ENCODE measurements at regions of chr16 and their contacts with region 1.

Region 1: GRCh38 chr16:1826691-1827575 is at the starts of genes FAHD1 and HAGH:
- DNase-seq: peak; percentile 91
- H3K4me3 Mint-ChIP-seq: peak within 1 kb of the TSS; percentile 96
- H3K27ac Mint-ChIP-seq: peak within 1 kb of the TSS; percentile 81
- H3K4me1 Mint-ChIP-seq: peaks cover 42% of the 10 kb centered on the region
- H3K27me3 Mint-ChIP-seq: no peaks in the 10 kb centered on the region
- total RNA-seq, gene FAHD1: 7.7 to 7.9 TPM
- total RNA-seq, gene HAGH: 51.3 to 51.8 TPM

Region 2: GRCh38 chr16:1782352-1783091 is 44.4 kb before region 1 on chr16 and contains the starts of genes NUBP2 and SPSB3:
- CTCF ChIA-PET with region 1: interaction called, 4 read pairs
- POLR2A ChIA-PET with region 1: interaction called, 20 read pairs
- DNase-seq: peak; percentile 99
- H3K4me3 Mint-ChIP-seq: peak within 1 kb of the TSS; percentile 91
- H3K27ac Mint-ChIP-seq: peak within 1 kb of the TSS; percentile 77
- H3K4me1 Mint-ChIP-seq: peaks cover 22% of the 10 kb centered on the region
- H3K27me3 Mint-ChIP-seq: no peaks in the 10 kb centered on the region
- total RNA-seq, gene NUBP2: 40.8 to 43.5 TPM
- total RNA-seq, gene SPSB3: 46.4 to 47.7 TPM

Region 3: GRCh38 chr16:1929578-1930337 is 102.8 kb after region 1 on chr16:
- CTCF ChIA-PET with region 1: no interaction called
- POLR2A ChIA-PET with region 1: no interaction called
- DNase-seq: peak; percentile 92
- H3K4me3 Mint-ChIP-seq: peak overlapping the region; percentile 58
- H3K27ac Mint-ChIP-seq: no peak overlapping the region
- H3K4me1 Mint-ChIP-seq: peaks cover 5% of the 10 kb centered on the region
- H3K27me3 Mint-ChIP-seq: peaks cover 2% of the 10 kb centered on the region

Measured in activated CD4-positive, alpha-beta memory T cell treated with anti-CD3 and anti-CD28 coated beads, Interleukin-2, amount 10 ng/mL, durations not matched to agents 7 days and 5 days (primary cell).